ENCODE measurements at regions of chr6 and their contacts with region 1.

Region 1: GRCh38 chr6:17688481-17688880 is 18.2 kb downstream of the NUP153 start:
- DNase-seq: no peak
- ATAC-seq: no peak
- H3K4me3 ChIP-seq: no peak overlapping the region
- H3K27ac ChIP-seq: no peak overlapping the region
- H3K4me1 ChIP-seq: peaks cover 3% of the 10 kb centered on the region in 2 experiments; a peak in 2 of 5 replicates
- H3K27me3 ChIP-seq: no peaks in the 10 kb centered on the region
- CTCF ChIP-seq: no peak
- EP300 ChIP-seq: no peak
- POLR2A ChIP-seq: no peak
- RAD21 ChIP-seq: no peak

Region 2: GRCh38 chr6:17656092-17656491 is 32.4 kb before region 1 on chr6:
- CTCF ChIA-PET with region 1: no interaction called
- POLR2A ChIA-PET with region 1: interaction called, 12 read pairs
- in situ Hi-C with region 1: no loop called
- intact Hi-C with region 1: no loop called
- DNase-seq: peak in 2 of 4 experiments; percentile 39 to 43
- ATAC-seq: peak; percentile 67; the same call in 2 of the 3 replicates
- H3K4me3 ChIP-seq: no peak overlapping the region
- H3K27ac ChIP-seq: no peak overlapping the region
- H3K4me1 ChIP-seq: no peaks in the 10 kb centered on the region
- H3K27me3 ChIP-seq: no peaks in the 10 kb centered on the region
- CTCF ChIP-seq: no peak
- EP300 ChIP-seq: no peak
- POLR2A ChIP-seq: 0 out of 2 replicates have a peak, but pooled peaks have one; percentile 31
- RAD21 ChIP-seq: no peak

Measured in K562 (cell line).